GM23248 (cell line): ENCODE measurements at regions of chr3 and their contacts with region 1.

Region 1: GRCh38 chr3:190224863-190225692 is 97.2 kb downstream of the CLDN1 start:
- DNase-seq: peak; percentile 64
- H3K4me3 ChIP-seq: no peak overlapping the region
- H3K27ac ChIP-seq: no peak overlapping the region
- H3K4me1 ChIP-seq: no peaks in the 10 kb centered on the region; the same call in 1 of the 2 replicates
- H3K27me3 ChIP-seq: no peaks in the 10 kb centered on the region

Region 2: GRCh38 chr3:190321789-190322603 is 96.9 kb after region 1 on chr3 and contains the start of gene CLDN1:
- in situ Hi-C with region 1: loop called (anchors 10 kb)
- DNase-seq: peak; percentile 90
- H3K4me3 ChIP-seq: peak within 1 kb of the TSS; percentile 74
- H3K27ac ChIP-seq: no peak within 1 kb of the TSS
- H3K4me1 ChIP-seq: peaks cover 18% of the 10 kb centered on the region
- H3K27me3 ChIP-seq: no peaks in the 10 kb centered on the region
- total RNA-seq, gene CLDN1: 0.32 and 0.38 TPM in 2 replicates

Region 3: GRCh38 chr3:190424478-190425439 is 199.7 kb after region 1 on chr3:
- in situ Hi-C with region 1: loop called (anchors 10 kb)
- DNase-seq: peak; percentile 77
- H3K4me3 ChIP-seq: no peak overlapping the region
- H3K27ac ChIP-seq: no peak overlapping the region
- H3K4me1 ChIP-seq: peaks cover 6% of the 10 kb centered on the region
- H3K27me3 ChIP-seq: no peaks in the 10 kb centered on the region

Region 4: GRCh38 chr3:190533511-190534277 is 308.6 kb after region 1 on chr3:
- in situ Hi-C with region 1: no loop called
- DNase-seq: peak; percentile 97
- H3K4me3 ChIP-seq: peak overlapping the region; percentile 60
- H3K27ac ChIP-seq: peak overlapping the region; percentile 90
- H3K4me1 ChIP-seq: peaks cover 32% of the 10 kb centered on the region
- H3K27me3 ChIP-seq: no peaks in the 10 kb centered on the region